PC-9 (cell line): ENCODE measurements at regions of chr5 and their contacts with region 1.

Region 1: DNA sequence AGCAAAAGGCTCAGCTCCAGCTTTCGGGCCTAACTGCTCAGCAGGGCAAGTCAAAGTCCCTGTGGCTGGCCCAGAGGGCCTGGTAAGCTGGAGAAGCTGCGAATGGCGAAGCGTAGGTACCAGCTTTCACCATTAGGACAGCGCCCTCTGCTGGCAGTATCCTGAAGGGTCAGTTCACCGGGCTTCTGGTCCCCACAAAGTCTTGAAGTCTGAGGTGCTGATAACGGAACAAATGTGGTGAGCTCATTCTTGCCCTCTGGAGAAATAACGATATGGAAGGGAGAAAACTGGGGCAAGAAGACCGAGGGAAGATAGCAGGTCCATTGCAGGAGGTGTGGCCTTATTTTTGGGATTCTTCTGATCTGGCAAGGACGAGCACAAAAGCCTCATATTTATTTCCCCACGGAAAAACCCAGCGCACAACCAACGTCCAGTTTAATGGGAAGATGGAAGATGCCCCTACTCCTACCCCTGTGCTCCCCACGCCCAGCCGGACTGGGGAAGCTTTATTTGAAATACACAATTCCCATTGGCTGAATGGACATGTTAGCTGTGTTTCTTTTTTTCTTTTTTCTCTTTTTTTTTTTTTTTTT is 7.2 kb downstream of the SOWAHA start:
- DNase-seq: peak; percentile 72 to 81
- H3K4me3 ChIP-seq: no peak overlapping the region
- H3K27ac ChIP-seq: no peak overlapping the region
- H3K4me1 ChIP-seq: peaks cover 14% of the 10 kb centered on the region
- H3K27me3 ChIP-seq: no peaks in the 10 kb centered on the region
- CTCF ChIP-seq: peak; percentile 96

Region 2: DNA sequence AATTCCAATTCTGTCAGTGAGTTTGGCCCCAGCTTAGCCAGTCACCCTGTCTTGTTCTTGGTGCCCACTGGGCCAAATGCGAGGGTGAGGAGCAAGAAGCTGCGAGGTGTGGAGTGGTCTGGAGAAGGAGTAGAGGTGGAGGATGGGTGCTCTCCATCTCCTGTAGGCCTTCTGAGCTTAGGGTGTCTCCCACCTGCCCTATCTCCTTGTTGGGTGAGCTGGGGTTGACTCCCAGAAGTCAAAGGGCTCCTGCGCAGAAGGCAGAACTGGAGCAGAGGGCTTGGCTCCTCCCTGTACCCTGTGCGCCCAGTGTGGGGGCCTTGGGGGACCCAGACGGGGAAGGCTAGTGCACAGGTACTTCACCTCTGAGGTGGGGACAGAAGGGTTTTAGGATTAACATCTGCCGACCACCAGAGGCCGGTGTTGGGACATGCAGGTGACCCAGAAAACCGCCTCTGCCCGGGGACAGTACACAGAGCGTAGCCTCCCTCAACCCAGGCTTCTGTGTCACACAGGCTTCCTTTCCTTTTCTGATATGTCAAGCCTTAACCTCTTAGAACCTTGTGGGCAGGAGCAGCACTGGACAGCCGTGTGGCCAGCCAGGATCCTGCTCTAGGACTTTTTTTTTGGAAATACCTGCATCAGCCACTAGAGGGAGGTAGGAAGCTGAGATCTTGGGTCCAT is 293.8 kb before region 1 on chr5:
- CTCF ChIA-PET with region 1: interaction called, 3 read pairs
- POLR2A ChIA-PET with region 1: no interaction called
- intact Hi-C with region 1: loop called (anchors 1 kb)
- DNase-seq: peak; percentile 52 to 63
- H3K4me3 ChIP-seq: no peak overlapping the region
- H3K27ac ChIP-seq: no peak overlapping the region
- H3K4me1 ChIP-seq: no peaks in the 10 kb centered on the region
- H3K27me3 ChIP-seq: no peaks in the 10 kb centered on the region
- CTCF ChIP-seq: peak; percentile 97

Region 3: GRCh38 chr5:132659598-132660493 is 160.4 kb before region 1 on chr5:
- CTCF ChIA-PET with region 1: interaction called, 19 read pairs
- POLR2A ChIA-PET with region 1: no interaction called
- intact Hi-C with region 1: no loop called
- DNase-seq: no peak
- H3K4me3 ChIP-seq: no peak overlapping the region
- H3K27ac ChIP-seq: no peak overlapping the region
- H3K4me1 ChIP-seq: no peaks in the 10 kb centered on the region
- H3K27me3 ChIP-seq: no peaks in the 10 kb centered on the region
- CTCF ChIP-seq: no peak

Region 4: GRCh38 chr5:132753135-132753987 is 66.9 kb before region 1 on chr5:
- CTCF ChIA-PET with region 1: interaction called, 8 read pairs
- POLR2A ChIA-PET with region 1: no interaction called
- intact Hi-C with region 1: loop called (anchors 2 kb)
- DNase-seq: no peak
- H3K4me3 ChIP-seq: no peak overlapping the region
- H3K27ac ChIP-seq: no peak overlapping the region
- H3K4me1 ChIP-seq: no peaks in the 10 kb centered on the region
- H3K27me3 ChIP-seq: no peaks in the 10 kb centered on the region
- CTCF ChIP-seq: no peak